ENCODE measurements at regions of chr16 and their contacts with region 1.

Region 1: GRCh38 chr16:8797364-8798173 is at the starts of genes PMM2 and TMEM186:
- DNase-seq: peak; percentile 97
- CTCF ChIP-seq: no peak

Region 2: DNA sequence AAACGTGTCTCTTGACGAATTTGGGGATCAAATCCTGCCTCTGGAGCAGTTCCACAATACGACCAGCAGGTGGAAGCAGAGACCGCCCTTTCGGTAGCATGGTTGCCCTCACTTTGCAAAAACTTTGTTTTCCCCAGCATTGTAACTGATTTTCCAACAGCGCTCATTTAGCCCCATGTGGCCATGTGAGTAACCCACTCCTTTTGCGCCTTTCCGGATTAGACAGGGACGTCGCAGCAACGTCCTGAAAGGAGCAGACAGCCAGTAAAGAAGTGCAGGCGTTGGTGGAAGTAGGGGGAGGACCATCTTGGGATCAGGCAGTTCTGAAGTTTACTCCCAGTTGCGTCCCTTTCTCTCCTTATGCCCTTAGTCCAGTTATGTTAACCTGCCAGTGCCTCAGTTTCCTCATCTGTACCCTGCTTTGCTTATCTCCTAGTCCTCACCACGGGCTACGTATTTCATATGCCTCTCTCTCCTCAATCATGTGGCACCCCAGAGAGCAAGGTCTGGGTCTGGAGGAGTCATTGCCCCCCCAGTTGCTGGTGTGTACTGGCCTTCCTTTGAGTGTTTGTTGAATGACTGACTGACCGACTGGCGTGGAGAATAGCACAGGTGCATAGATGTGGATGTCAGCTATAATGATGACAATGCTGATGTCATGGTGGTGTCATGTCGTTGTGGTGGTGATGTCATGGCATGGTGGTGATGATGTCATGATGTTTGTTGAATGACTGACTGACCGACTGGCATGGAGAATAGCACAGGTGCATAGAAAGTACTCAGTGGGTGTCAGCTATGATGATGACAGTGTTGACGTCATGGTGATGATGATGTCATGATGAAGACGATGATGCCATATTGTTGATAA is 229.6 kb before region 1 on chr16:
- in situ Hi-C with region 1: loop called (anchors 25 kb)
- DNase-seq: peak; percentile 83
- CTCF ChIP-seq: peak; percentile 91

Region 3: DNA sequence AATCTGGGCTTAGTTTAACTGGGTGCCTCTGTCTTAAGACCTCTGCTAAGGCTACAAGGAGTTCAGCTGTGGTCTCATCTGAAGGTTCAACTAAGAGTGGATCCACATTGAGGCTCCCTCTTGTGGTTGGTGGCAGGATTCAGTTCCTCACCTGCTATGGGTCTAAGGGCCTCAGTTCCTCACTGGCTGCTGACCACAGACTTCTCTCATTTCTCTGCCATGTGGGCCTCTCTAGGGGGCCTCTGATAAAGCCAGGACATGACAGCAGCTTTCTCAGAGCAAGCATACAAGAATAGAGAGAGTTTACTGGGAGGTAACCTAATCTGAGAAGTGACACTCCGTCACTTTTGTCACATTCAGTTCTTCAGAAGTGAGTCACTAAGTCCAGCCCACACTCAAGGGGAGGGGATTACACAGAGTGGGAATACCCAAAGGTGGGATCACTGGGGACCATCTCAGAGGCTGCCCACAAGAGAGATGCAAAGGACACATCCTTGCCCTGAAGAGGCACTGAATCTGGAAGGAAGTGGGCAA is 142.3 kb before region 1 on chr16:
- in situ Hi-C with region 1: no loop called
- DNase-seq: peak; percentile 57
- CTCF ChIP-seq: peak; percentile 68

Region 4: DNA sequence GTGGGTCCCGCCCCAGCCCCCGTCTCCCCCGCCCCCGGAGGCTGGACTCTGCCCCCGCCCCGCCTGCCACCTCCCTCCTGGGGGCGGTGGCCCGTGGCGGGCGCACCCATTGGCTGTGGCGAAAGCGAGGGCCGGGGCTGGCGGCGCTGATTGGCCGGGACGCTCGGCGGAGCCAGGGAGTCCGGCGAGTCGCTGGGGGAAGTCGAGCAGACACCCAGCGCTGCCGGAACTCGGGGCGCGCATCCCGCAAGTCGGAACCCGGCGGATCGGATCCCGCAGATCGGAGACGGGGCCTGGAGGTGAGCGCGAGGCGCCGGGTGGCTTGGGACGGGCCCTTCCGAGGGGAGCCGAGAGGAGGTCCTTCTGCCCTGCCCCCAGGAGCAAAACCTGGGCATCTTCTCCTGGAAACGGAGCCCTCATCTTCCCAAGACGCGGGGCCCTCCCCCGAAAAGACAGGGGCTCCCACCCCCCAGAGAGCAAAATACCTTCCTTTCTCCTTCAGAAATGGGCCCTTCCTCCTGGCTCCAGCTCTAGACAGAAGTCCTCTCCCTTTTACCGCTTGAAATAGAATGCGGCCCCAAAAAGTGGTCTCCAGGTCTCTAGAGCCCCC is 123.1 kb before region 1 on chr16 and contains the start of gene ABAT:
- in situ Hi-C with region 1: loop called (anchors 10 kb)
- DNase-seq: peak; percentile 97
- CTCF ChIP-seq: no peak

Region 5: DNA sequence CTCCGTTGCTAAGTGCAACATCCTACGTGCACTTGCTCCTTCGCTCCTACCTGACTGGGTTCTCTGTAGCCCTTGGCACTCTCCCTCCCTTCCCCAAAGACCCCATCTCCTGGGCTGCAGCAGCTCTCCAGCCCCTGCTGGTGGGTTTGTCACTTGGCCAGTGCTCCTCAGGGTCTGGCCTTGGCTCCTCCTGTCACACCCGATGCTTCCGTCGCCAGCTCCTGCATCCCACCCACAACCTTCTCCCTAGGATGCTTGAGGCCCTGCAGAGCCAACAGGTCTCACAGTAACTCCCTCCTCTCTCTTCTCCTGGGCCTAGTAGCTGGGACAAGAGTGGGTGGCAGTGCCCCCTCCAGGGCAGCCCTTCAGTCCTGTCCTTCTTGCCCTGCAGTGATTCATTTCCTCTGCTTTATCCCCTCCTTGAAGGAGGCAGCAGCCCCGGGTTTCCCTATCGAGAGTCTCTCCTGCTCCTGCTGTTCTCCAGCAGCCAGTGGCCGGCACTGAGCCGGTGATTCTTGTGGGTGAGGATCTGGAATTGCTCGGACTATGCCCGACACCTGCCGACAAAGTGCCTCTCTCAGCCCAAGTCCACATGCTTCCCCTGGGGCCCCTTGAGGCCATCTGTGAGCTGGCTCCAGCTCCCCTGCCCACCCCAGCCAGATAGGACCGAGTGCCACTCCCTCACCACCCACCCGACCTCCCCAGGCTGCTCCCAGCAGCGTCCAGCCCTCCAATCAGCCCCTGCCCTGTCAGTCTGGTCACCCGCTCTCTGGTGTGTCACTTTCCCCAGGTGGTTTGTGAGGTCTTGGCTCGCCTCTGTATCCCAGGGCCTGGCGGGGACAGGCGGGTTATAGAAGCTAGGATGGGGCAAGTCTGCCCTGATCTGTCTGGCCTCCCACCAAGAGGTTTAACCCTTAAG is 88.4 kb after region 1 on chr16:
- in situ Hi-C with region 1: no loop called
- DNase-seq: no peak
- CTCF ChIP-seq: no peak